ENCODE measurements at regions of chr2 and their contacts with region 1.

Region 1: GRCh38 chr2:170928824-170929685 is at the start of gene GORASP2:
- DNase-seq: peak; percentile 99
- ATAC-seq: peak; percentile 95
- H3K4me3 Mint-ChIP-seq: peak within 1 kb of the TSS; percentile 99
- H3K27ac Mint-ChIP-seq: peak within 1 kb of the TSS; percentile 97
- H3K4me1 Mint-ChIP-seq: peaks cover 41% of the 10 kb centered on the region
- H3K27me3 Mint-ChIP-seq: no peaks in the 10 kb centered on the region
- total RNA-seq, gene GORASP2: 65.2 to 65.9 TPM

Region 2: DNA sequence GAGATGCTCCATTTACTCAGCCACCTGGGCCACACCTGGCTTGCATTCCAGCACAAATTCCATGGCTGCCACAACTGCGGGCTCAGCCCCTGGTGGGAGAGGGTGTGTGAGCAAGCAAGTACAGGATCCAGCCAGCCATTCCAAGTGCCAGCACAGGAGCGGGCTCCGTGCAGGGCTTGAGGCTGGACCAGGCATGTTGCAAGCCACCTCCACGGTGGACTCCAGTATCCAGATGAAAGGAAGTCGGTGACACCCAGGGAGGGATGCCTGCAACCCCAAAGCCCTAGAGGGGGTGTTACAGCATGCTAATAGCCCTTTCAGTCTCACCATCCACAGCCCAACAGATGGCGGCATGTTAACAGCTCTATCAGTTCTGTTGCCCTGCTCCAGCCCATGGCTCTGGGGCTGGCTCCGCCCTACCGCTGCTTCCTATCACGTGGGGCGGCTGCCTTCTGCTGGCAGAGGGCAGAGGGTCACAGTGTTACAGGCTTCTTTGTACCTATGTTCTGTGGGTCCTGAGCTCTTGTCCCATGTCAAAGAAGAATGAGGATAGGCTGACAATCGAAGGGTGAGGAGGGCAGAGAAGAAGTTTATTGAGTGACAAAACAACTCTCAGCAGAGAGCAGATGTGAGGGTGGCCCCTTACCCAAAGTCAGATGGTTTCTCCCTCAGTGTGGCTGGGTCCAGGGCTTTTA is 11.7 kb before region 1 on chr2:
- CTCF ChIA-PET with region 1: interaction called, 12 read pairs
- POLR2A ChIA-PET with region 1: no interaction called
- DNase-seq: no peak
- ATAC-seq: no peak
- H3K4me3 Mint-ChIP-seq: no peak overlapping the region
- H3K27ac Mint-ChIP-seq: no peak overlapping the region
- H3K4me1 Mint-ChIP-seq: no peaks in the 10 kb centered on the region
- H3K27me3 Mint-ChIP-seq: no peaks in the 10 kb centered on the region

Region 3: GRCh38 chr2:170950221-170950761 is 21.2 kb after region 1 on chr2:
- CTCF ChIA-PET with region 1: interaction called, 12 read pairs
- POLR2A ChIA-PET with region 1: no interaction called
- DNase-seq: no peak
- ATAC-seq: no peak
- H3K4me3 Mint-ChIP-seq: no peak overlapping the region
- H3K27ac Mint-ChIP-seq: no peak overlapping the region
- H3K4me1 Mint-ChIP-seq: no peaks in the 10 kb centered on the region
- H3K27me3 Mint-ChIP-seq: no peaks in the 10 kb centered on the region

Region 4: GRCh38 chr2:171086352-171087290 is 157.6 kb after region 1 on chr2:
- CTCF ChIA-PET with region 1: interaction called, 16 read pairs
- POLR2A ChIA-PET with region 1: interaction called, 3 read pairs
- DNase-seq: peak; percentile 65
- ATAC-seq: peak; percentile 84
- H3K4me3 Mint-ChIP-seq: peak overlapping the region; percentile 63
- H3K27ac Mint-ChIP-seq: peak overlapping the region; percentile 62
- H3K4me1 Mint-ChIP-seq: peaks cover 40% of the 10 kb centered on the region
- H3K27me3 Mint-ChIP-seq: no peaks in the 10 kb centered on the region

Region 5: DNA sequence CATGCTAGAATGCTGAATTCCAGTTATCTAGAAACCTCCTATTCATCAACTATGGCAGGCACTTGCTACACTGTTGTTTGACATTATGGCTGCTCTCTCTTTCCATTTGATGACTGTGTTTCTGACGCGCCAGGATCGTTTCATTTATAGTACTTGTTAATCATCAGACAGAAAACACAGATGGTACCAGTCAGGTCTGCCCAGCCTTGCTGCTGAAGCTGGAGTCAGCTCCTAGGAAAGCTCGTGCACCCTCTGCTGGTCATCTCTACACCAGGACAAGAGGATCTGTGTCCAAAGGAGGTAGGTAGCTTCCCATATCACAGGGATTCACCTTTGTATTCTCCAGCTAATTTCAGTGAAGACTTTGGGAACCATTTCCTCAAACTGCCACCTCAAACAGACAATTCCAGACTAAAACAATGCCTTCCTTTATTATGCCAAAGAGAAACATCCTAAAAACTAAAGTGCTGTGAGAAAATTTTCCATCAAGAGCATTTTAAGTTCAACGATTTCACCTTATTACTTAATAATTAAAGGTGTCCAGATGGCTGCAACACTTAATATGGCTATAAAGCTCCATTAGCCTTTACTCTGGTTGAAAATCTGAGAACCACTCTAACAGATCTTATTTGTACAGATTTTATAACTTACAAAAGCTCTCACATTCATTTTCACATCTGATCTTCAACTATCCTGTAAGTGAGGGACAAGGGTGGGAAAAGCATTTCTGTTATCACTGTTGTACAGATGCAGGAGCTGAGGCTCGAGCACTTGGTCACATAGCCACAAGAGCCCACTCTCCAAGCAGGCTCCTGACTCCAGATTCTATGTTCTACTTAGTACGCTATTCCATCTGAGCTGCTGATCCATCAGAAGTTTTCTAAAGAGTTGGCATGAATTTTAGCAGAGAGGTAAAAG is 487.2 kb after region 1 on chr2:
- CTCF ChIA-PET with region 1: interaction called, 16 read pairs
- POLR2A ChIA-PET with region 1: no interaction called
- DNase-seq: peak; percentile 86
- ATAC-seq: peak; percentile 94
- H3K4me3 Mint-ChIP-seq: no peak overlapping the region
- H3K27ac Mint-ChIP-seq: peak overlapping the region; percentile 1
- H3K4me1 Mint-ChIP-seq: peaks cover 15% of the 10 kb centered on the region
- H3K27me3 Mint-ChIP-seq: no peaks in the 10 kb centered on the region